Activated CD4-positive, alpha-beta memory T cell treated with anti-CD3 and anti-CD28 coated beads, Interleukin-2, amount 10 ng/mL, durations not matched to agents 7 days and 5 days (primary cell): ENCODE measurements at regions of chr1 and their contacts with region 1.

Region 1: DNA sequence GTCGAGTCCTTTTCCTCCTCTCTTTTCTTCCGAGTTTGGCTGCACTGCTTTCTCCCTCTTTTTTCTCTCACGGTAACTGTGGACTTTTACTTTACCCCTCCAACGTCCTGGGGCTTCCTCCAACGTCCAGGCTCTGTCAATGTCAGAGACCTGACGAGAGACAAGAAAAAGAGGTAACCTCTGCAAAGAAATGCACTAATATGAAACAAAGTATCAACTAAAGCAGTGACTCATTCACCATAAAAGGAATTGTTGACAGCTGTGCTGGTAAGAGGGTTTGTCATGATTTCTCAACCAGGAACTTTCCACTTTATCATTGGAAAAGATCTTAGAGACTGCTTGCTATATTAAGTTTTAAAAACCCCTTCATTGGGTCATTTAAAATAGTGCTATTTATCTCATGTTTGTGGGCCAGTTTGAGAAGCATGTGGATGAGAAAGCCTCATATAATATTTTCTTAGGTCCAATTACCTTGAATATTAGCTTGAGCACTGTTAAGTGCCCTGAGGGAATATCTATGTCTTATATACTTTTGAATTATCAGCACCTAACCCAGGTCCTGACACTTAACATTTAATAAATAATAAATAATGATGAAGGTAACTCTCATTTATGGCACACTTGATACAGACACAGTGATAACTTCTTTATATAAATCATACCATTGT is at the start of gene GBP2:
- DNase-seq: peak; percentile 32
- H3K4me3 Mint-ChIP-seq: peak within 1 kb of the TSS; percentile 99
- H3K27ac Mint-ChIP-seq: peak within 1 kb of the TSS; percentile 97
- H3K4me1 Mint-ChIP-seq: peaks cover 55% of the 10 kb centered on the region
- H3K27me3 Mint-ChIP-seq: no peaks in the 10 kb centered on the region
- total RNA-seq, gene GBP2: 280 to 281 TPM

Region 2: GRCh38 chr1:89022167-89022959 is 103.7 kb before region 1 on chr1 and contains the start of gene GBP3:
- CTCF ChIA-PET with region 1: interaction called, 3 read pairs
- POLR2A ChIA-PET with region 1: interaction called, 15 read pairs
- DNase-seq: no peak
- H3K4me3 Mint-ChIP-seq: peak within 1 kb of the TSS; percentile 87
- H3K27ac Mint-ChIP-seq: peak within 1 kb of the TSS; percentile 84
- H3K4me1 Mint-ChIP-seq: peaks cover 40% of the 10 kb centered on the region
- H3K27me3 Mint-ChIP-seq: no peaks in the 10 kb centered on the region
- total RNA-seq, gene GBP3: 33.6 to 34.4 TPM

Region 3: DNA sequence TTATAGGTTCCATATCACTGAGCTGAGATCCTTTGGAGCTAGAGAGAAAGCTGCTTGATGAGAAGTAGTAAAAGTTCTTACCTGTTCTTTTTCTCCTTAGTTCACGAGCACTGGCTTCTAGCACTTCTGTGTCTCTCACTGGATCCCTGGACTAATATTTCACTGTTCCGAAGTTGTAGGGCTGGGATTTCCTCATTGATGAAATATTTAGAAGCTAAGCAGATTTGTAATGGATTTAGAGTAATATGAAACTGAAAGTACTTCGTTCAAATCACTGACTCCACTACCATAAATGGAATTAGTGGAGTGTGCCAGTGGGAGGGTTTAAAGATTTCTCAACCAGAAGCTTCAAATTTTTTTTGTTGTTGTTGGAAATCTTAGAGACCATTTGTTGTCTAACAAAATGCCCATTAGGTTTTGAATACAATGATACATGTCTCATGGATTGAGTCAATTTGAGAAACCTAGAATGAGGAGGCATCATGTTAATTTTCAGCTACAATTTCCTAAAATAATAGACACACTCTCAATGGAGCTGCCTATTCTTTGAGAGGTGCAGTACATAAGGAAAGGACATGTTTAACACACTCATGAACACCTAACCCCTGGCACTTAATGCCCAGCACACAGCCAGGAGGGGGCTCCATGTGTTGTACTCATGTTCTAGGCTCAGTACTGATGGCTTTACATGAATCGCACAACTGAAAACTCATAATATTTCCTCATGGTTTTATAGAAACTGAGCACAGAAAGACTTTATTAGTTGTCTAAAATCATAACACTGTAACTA is 60.8 kb before region 1 on chr1 and contains the start of gene GBP1:
- CTCF ChIA-PET with region 1: interaction called, 3 read pairs
- POLR2A ChIA-PET with region 1: interaction called, 11 read pairs
- DNase-seq: no peak
- H3K4me3 Mint-ChIP-seq: peak within 1 kb of the TSS; percentile 96
- H3K27ac Mint-ChIP-seq: peak within 1 kb of the TSS; percentile 88
- H3K4me1 Mint-ChIP-seq: peaks cover 59% of the 10 kb centered on the region
- H3K27me3 Mint-ChIP-seq: no peaks in the 10 kb centered on the region
- total RNA-seq, gene GBP1: 141 to 144 TPM

Region 4: DNA sequence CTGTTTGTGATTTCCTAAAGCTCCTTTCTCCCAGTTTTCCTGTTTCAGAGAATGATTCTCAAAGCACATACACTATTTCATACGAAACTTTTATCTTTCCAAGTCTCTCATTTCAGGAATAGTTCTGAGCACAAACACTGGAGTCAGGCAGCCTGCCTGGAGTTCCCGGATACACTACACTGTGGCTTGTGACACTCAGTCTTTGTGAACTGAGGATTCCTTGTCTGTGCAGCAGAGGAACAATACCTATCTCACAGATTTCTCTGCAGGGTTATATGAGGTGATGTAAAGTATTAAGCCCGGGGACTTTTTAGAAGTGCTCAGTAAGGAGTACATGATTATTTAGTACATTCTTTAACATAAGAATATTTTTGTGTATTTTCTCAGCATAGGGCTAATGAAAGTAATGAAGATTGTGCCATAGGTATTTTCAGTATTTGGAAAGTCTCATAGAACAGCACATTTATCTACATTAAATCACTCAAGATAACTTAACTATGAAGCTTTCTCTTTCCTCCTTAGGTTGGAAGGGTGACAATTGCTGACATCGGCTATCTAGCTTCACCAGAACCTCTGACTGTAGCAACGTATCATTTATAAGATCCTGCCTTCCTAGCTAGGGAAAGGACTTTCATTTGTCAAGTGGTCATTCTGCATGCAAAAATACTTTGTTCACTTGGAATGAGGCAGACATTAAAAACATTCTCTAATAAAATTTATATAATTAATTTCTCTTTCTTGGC is 13.0 kb before region 1 on chr1:
- CTCF ChIA-PET with region 1: interaction called, 7 read pairs
- POLR2A ChIA-PET with region 1: interaction called, 14 read pairs
- DNase-seq: no peak
- H3K4me3 Mint-ChIP-seq: no peak overlapping the region
- H3K27ac Mint-ChIP-seq: no peak overlapping the region
- H3K4me1 Mint-ChIP-seq: peaks cover 24% of the 10 kb centered on the region
- H3K27me3 Mint-ChIP-seq: no peaks in the 10 kb centered on the region

Region 5: DNA sequence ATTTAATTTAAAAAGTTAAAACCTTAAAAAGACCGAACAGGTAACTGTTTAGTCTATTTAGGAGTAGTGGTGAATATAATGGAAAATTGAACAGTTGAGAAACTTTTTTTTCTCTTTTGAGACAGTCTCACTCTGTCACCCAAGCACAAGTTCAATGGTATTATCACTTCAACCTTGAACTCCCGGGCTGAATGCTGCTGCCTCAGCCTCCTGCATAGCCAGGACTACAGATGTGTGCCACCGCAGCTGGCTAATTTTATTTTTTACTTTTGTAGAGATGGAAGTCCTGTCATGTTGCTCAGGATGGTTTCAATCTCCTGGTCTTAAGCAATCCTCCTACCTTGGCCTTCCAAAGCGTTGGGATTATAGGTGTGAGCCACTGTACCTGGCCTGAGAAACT is 16.1 kb after region 1 on chr1:
- CTCF ChIA-PET with region 1: no interaction called
- POLR2A ChIA-PET with region 1: no interaction called
- DNase-seq: no peak
- H3K4me3 Mint-ChIP-seq: no peak overlapping the region
- H3K27ac Mint-ChIP-seq: no peak overlapping the region
- H3K4me1 Mint-ChIP-seq: no peaks in the 10 kb centered on the region
- H3K27me3 Mint-ChIP-seq: peaks cover 8% of the 10 kb centered on the region

Region 6: GRCh38 chr1:89286549-89287180 is 160.6 kb after region 1 on chr1:
- CTCF ChIA-PET with region 1: no interaction called
- POLR2A ChIA-PET with region 1: interaction called, 36 read pairs
- DNase-seq: peak; percentile 28
- H3K4me3 Mint-ChIP-seq: peak overlapping the region; percentile 43
- H3K27ac Mint-ChIP-seq: peak overlapping the region; percentile 94
- H3K4me1 Mint-ChIP-seq: peaks cover 69% of the 10 kb centered on the region
- H3K27me3 Mint-ChIP-seq: no peaks in the 10 kb centered on the region

Region 7: GRCh38 chr1:89310505-89310904 is 184.5 kb after region 1 on chr1:
- CTCF ChIA-PET with region 1: no interaction called
- POLR2A ChIA-PET with region 1: interaction called, 17 read pairs
- DNase-seq: no peak
- H3K4me3 Mint-ChIP-seq: peak overlapping the region; percentile 26
- H3K27ac Mint-ChIP-seq: peak overlapping the region; percentile 94
- H3K4me1 Mint-ChIP-seq: peaks cover 44% of the 10 kb centered on the region
- H3K27me3 Mint-ChIP-seq: no peaks in the 10 kb centered on the region

Region 8: GRCh38 chr1:89358287-89358893 is 232.3 kb after region 1 on chr1:
- CTCF ChIA-PET with region 1: interaction called, 7 read pairs
- POLR2A ChIA-PET with region 1: interaction called, 23 read pairs
- DNase-seq: peak; percentile 86
- H3K4me3 Mint-ChIP-seq: peak overlapping the region; percentile 29
- H3K27ac Mint-ChIP-seq: no peak overlapping the region
- H3K4me1 Mint-ChIP-seq: peaks cover 47% of the 10 kb centered on the region
- H3K27me3 Mint-ChIP-seq: no peaks in the 10 kb centered on the region